ENCODE measurements at regions of chr5 and their contacts with region 1.

Region 1: GRCh38 chr5:177431317-177432142 is 5.1 kb downstream of the GRK6 start:
- DNase-seq: no peak
- H3K4me3 ChIP-seq: no peak overlapping the region
- H3K27ac ChIP-seq: no peak overlapping the region
- H3K4me1 ChIP-seq: peaks cover 0 to 14% (median 9%) of the 10 kb centered on the region in 4 experiments; a peak in 5 of 7 replicates
- H3K27me3 ChIP-seq: no peaks in the 10 kb centered on the region
- CTCF ChIP-seq: no peak
- EP300 ChIP-seq: no peak
- POLR2A ChIP-seq: no peak
- RAD21 ChIP-seq: no peak

Region 2: DNA sequence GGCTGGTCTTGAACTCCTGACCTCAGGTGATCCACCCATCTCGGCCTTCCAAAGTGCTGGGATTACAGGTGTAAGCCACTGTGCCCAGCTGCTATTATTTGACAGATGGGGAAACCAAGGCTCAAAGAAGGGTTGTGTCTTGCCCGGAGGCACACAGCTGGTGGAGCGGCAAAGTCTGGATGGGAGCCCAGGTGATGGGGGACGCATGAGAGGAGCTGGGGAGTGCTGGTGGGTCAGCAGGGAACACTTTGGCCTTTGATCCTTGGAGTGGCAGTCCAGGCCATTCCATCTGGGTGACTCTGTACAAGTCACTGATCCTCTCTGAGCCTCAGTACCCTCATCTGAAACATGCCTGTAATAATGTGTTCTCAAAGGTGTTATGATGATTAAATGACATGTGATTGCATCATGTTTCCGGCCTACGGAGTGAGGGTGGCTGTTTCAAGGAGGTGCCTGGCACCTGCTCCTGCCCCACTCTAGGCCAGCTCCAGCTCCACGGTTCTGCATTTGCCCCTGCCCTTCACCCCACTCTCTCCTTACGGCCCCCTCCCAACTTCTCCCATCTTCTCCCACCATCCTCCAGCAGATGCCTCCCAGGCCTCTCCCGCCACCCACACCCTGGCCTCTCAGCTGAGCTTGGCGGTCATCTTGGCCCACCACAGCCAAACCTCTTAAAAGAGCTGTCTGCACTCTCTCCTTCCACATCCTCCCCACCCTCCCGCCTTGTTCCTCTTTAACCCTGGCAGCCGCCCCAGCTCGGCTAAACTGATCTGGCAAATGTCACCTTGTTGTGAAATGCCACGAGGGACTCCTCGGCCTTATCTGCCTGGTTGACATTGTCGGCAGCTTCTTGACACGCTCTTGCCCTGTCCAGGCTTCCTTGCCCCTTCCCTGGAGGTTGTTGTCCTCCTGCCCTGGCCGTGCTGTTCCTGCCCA is 47.4 kb after region 1 on chr5:
- CTCF ChIA-PET with region 1: interaction called, 4 read pairs
- POLR2A ChIA-PET with region 1: interaction called, 3,349 read pairs
- DNase-seq: no peak
- H3K4me3 ChIP-seq: no peak overlapping the region
- H3K27ac ChIP-seq: no peak overlapping the region
- H3K4me1 ChIP-seq: peaks cover 0 to 17% (median 9%) of the 10 kb centered on the region in 4 experiments; a peak in 6 of 7 replicates
- H3K27me3 ChIP-seq: no peaks in the 10 kb centered on the region
- CTCF ChIP-seq: no peak
- EP300 ChIP-seq: no peak
- POLR2A ChIP-seq: peak in 1 of 2 experiments; percentile 63; a peak in 2 of 3 replicates
- RAD21 ChIP-seq: no peak